GM12878 (cell line): ENCODE measurements at regions of chr15 and their contacts with region 1.

Region 1: DNA sequence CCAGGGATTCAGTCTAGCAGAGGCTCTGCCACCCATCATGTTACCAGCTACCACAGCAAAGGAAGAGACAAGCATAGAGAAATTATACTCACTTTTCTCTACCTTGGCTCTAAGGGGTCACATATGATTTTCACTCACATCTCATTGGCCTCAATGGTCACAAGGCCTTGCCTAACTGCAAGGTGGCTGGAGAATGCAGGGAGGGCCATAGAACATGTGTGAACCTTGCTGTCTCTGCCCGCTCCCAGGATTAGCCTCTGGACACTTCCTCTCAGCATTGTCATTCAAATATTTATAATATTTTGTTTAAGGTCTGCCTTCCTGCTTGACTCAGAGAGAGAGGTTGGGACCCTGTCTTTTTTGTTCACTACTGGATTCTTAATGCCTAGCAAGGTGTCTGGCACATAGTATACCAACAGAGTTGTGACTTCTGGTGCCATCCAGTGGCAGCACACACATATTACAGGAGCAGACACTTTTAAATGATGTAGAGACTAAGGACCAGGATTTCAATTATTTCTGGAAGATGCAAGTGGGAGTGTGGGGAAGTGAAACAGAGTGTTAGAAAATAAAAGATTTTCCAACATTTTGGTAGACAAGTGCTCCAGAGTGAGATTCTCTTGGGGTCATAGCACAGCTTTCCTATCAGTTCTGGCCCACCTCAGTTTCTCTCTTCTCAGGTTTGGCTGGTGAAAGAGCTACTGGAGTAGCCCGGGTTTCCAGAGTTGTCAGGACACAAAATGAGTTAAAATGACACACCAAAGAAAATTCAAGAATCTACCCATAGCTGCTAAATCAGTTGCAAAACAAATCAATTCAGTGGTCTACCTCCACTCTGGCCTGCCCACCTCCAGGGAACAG is 119.0 kb upstream of the RASGRP1 start:
- DNase-seq: no peak
- ATAC-seq: peak; percentile 94
- H3K4me3 ChIP-seq: no peak overlapping the region
- H3K27ac ChIP-seq: no peak overlapping the region
- H3K4me1 ChIP-seq: peaks cover 5% of the 10 kb centered on the region
- H3K27me3 ChIP-seq: no peaks in the 10 kb centered on the region
- CTCF ChIP-seq: peak; percentile 73 to 91 (median 88)
- EP300 ChIP-seq: no peak
- POLR2A ChIP-seq: no peak
- RAD21 ChIP-seq: peak; percentile 99

Region 2: GRCh38 chr15:38414357-38414756 is 269.3 kb before region 1 on chr15:
- CTCF ChIA-PET with region 1: no interaction called
- POLR2A ChIA-PET with region 1: no interaction called
- RAD21 ChIA-PET with region 1: no interaction called
- SMC1A ChIA-PET with region 1: no interaction called
- in situ Hi-C with region 1: no loop called
- intact Hi-C with region 1: no loop called
- DNase-seq: no peak
- ATAC-seq: peak; percentile 81
- H3K4me3 ChIP-seq: no peak overlapping the region
- H3K27ac ChIP-seq: no peak overlapping the region
- H3K4me1 ChIP-seq: no peaks in the 10 kb centered on the region
- H3K27me3 ChIP-seq: no peaks in the 10 kb centered on the region; a peak in 1 of 4 replicates
- CTCF ChIP-seq: peak; percentile 39 to 52 (median 51); a peak in 5 of 6 replicates
- EP300 ChIP-seq: no peak
- POLR2A ChIP-seq: no peak
- RAD21 ChIP-seq: peak; percentile 44

Region 3: DNA sequence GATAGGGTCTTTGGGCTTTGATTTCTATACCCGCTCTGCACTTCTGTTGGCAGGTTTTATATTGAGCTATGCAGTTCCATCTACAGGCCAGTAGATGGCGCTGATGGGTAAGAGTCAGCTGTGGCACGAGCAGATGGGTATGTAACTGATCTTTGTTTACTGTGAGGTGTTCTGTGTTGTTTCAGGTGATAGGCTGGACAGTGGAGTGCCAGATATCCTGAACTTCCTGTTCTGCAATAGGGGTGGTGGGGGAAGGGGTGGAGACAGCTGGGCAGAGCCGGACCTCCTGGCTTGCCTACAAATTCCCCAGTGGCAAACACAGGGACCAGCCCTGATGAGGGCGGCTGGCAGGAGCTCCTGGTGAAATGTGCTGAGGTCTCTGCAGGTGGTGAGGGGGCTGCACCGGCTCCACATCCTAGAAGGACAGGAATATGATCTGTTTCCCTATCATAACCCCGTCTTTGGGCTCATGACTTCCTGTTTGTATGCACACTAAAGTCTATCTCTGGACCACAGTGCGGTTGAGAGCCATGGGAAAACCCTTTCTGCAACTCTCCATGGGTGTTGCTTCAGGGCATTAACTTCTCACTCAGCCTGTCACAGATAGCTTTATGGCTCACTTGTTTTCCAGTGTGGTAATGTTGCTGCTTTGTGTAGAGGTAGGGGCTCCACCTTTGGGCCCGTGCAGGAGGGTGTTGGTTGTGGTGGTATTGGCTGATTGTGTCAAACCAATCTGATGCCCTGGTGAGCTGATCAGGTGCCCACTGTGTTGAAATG is 243.1 kb before region 1 on chr15:
- CTCF ChIA-PET with region 1: interaction called, 288 read pairs
- POLR2A ChIA-PET with region 1: interaction called, 4 read pairs
- RAD21 ChIA-PET with region 1: interaction called, 207 read pairs
- SMC1A ChIA-PET with region 1: interaction called, 212 read pairs
- in situ Hi-C with region 1: no loop called
- intact Hi-C with region 1: loop called (anchors 2 kb)
- DNase-seq: peak; percentile 44
- ATAC-seq: peak; percentile 92
- H3K4me3 ChIP-seq: no peak overlapping the region
- H3K27ac ChIP-seq: no peak overlapping the region
- H3K4me1 ChIP-seq: peaks cover 8% of the 10 kb centered on the region
- H3K27me3 ChIP-seq: peaks cover 0 to 3% of the 10 kb centered on the region in 2 experiments; a peak in 2 of 4 replicates
- CTCF ChIP-seq: peak; percentile 90 to 94 (median 91)
- EP300 ChIP-seq: no peak
- POLR2A ChIP-seq: no peak
- RAD21 ChIP-seq: peak; percentile 96

Region 4: GRCh38 chr15:38490242-38490922 is 193.2 kb before region 1 on chr15:
- CTCF ChIA-PET with region 1: interaction called, 16 read pairs
- POLR2A ChIA-PET with region 1: no interaction called
- RAD21 ChIA-PET with region 1: interaction called, 6 read pairs
- SMC1A ChIA-PET with region 1: interaction called, 37 read pairs
- in situ Hi-C with region 1: no loop called
- intact Hi-C with region 1: no loop called
- DNase-seq: no peak
- ATAC-seq: no peak
- H3K4me3 ChIP-seq: no peak overlapping the region
- H3K27ac ChIP-seq: no peak overlapping the region
- H3K4me1 ChIP-seq: no peaks in the 10 kb centered on the region
- H3K27me3 ChIP-seq: no peaks in the 10 kb centered on the region
- CTCF ChIP-seq: no peak
- EP300 ChIP-seq: no peak
- POLR2A ChIP-seq: no peak
- RAD21 ChIP-seq: no peak

Region 5: GRCh38 chr15:38536201-38536676 is 147.4 kb before region 1 on chr15:
- CTCF ChIA-PET with region 1: interaction called, 4 read pairs
- POLR2A ChIA-PET with region 1: no interaction called
- RAD21 ChIA-PET with region 1: interaction called, 21 read pairs
- SMC1A ChIA-PET with region 1: interaction called, 11 read pairs
- in situ Hi-C with region 1: no loop called
- intact Hi-C with region 1: no loop called
- DNase-seq: no peak
- ATAC-seq: no peak
- H3K4me3 ChIP-seq: no peak overlapping the region
- H3K27ac ChIP-seq: no peak overlapping the region
- H3K4me1 ChIP-seq: no peaks in the 10 kb centered on the region
- H3K27me3 ChIP-seq: no peaks in the 10 kb centered on the region
- CTCF ChIP-seq: no peak
- EP300 ChIP-seq: no peak
- POLR2A ChIP-seq: no peak
- RAD21 ChIP-seq: no peak

Region 6: DNA sequence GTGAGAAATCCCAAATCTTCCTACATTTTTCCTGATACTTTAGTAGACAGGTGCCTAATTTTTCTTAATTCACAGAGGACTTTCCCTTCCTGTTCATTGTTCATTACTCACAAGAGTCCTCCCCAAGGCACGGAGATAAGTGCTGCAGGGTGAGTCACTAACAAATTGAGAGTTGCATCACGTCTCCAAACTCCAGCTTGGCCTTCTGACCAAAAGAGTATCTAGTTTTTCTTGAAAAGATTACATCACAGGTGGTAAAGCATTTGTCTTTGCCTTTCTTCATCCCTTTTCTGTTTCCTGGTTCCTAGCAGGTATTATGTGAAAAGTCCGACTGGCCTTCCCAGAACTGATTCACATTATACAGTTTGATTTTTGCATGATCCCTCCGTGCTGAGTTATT is 94.1 kb before region 1 on chr15:
- CTCF ChIA-PET with region 1: interaction called, 4 read pairs
- POLR2A ChIA-PET with region 1: interaction called, 3 read pairs
- RAD21 ChIA-PET with region 1: interaction called, 9 read pairs
- SMC1A ChIA-PET with region 1: interaction called, 11 read pairs
- in situ Hi-C with region 1: no loop called
- intact Hi-C with region 1: no loop called
- DNase-seq: no peak
- ATAC-seq: no peak
- H3K4me3 ChIP-seq: no peak overlapping the region
- H3K27ac ChIP-seq: no peak overlapping the region
- H3K4me1 ChIP-seq: no peaks in the 10 kb centered on the region
- H3K27me3 ChIP-seq: no peaks in the 10 kb centered on the region
- CTCF ChIP-seq: no peak
- EP300 ChIP-seq: no peak
- POLR2A ChIP-seq: no peak
- RAD21 ChIP-seq: no peak

Region 7: GRCh38 chr15:38636597-38636996 is 47.0 kb before region 1 on chr15:
- CTCF ChIA-PET with region 1: interaction called, 52 read pairs
- POLR2A ChIA-PET with region 1: interaction called, 9 read pairs
- RAD21 ChIA-PET with region 1: interaction called, 322 read pairs
- SMC1A ChIA-PET with region 1: interaction called, 1,803 read pairs
- in situ Hi-C with region 1: no loop called
- intact Hi-C with region 1: no loop called
- DNase-seq: no peak
- ATAC-seq: no peak
- H3K4me3 ChIP-seq: no peak overlapping the region
- H3K27ac ChIP-seq: no peak overlapping the region
- H3K4me1 ChIP-seq: no peaks in the 10 kb centered on the region
- H3K27me3 ChIP-seq: no peaks in the 10 kb centered on the region
- CTCF ChIP-seq: no peak
- EP300 ChIP-seq: no peak
- POLR2A ChIP-seq: no peak
- RAD21 ChIP-seq: no peak

Region 8: GRCh38 chr15:38699633-38700230 is 16.1 kb after region 1 on chr15:
- CTCF ChIA-PET with region 1: interaction called, 283 read pairs
- POLR2A ChIA-PET with region 1: interaction called, 21 read pairs
- RAD21 ChIA-PET with region 1: interaction called, 109 read pairs
- SMC1A ChIA-PET with region 1: interaction called, 249 read pairs
- in situ Hi-C with region 1: no loop called
- intact Hi-C with region 1: no loop called
- DNase-seq: no peak
- ATAC-seq: peak; percentile 68
- H3K4me3 ChIP-seq: no peak overlapping the region
- H3K27ac ChIP-seq: no peak overlapping the region
- H3K4me1 ChIP-seq: peaks cover 19% of the 10 kb centered on the region
- H3K27me3 ChIP-seq: no peaks in the 10 kb centered on the region
- CTCF ChIP-seq: peak; percentile 85 to 92 (median 87)
- EP300 ChIP-seq: no peak
- POLR2A ChIP-seq: no peak
- RAD21 ChIP-seq: peak; percentile 79

Region 9: DNA sequence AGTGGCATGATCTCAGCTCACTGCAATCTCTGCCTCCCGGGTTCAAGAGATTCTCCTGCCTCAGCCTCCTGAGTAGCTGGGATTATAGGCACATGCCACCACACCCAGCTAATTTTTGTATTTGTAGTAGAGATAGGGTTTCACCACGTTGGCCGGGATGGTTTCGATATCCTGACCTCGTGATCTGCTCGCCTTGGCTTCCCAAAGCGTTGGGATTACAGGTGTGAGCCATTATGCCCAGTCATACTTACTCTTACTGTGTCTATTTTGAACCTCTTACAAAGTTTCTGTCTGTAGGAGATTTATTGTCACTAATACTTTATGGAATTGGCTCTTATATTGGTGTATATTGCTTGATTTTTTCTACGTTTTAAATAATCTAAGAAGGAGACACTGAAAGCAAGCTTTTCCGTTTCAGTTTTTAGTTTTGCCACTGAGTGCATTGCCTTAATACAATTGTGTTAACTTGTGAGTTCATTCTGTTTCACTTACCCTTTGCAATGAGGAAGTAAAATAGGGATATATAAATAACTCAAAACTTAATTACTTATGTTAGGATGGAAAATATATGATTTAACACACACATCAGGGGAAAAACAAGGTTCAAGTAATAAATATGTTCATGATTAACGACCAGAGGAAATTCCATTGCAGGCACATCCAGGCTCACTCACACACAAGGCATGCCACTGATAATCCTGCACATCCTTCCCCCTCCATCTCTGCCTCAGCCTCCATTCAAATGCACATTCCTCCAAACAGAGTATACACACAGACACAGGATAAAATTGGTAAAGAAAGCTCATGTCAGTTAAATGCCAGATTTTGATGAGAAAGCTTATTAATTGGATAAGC is 160.4 kb after region 1 on chr15:
- CTCF ChIA-PET with region 1: no interaction called
- POLR2A ChIA-PET with region 1: no interaction called
- RAD21 ChIA-PET with region 1: no interaction called
- SMC1A ChIA-PET with region 1: no interaction called
- in situ Hi-C with region 1: no loop called
- intact Hi-C with region 1: no loop called
- DNase-seq: no peak
- ATAC-seq: no peak
- H3K4me3 ChIP-seq: no peak overlapping the region
- H3K27ac ChIP-seq: no peak overlapping the region
- H3K4me1 ChIP-seq: no peaks in the 10 kb centered on the region
- H3K27me3 ChIP-seq: no peaks in the 10 kb centered on the region; a peak in 1 of 4 replicates
- CTCF ChIP-seq: no peak
- EP300 ChIP-seq: no peak
- POLR2A ChIP-seq: no peak
- RAD21 ChIP-seq: no peak

Region 10: GRCh38 chr15:39358441-39359041 is 674.9 kb after region 1 on chr15:
- CTCF ChIA-PET with region 1: no interaction called
- POLR2A ChIA-PET with region 1: no interaction called
- RAD21 ChIA-PET with region 1: no interaction called
- SMC1A ChIA-PET with region 1: no interaction called
- in situ Hi-C with region 1: no loop called
- intact Hi-C with region 1: no loop called
- DNase-seq: no peak
- ATAC-seq: peak; percentile 83
- H3K4me3 ChIP-seq: no peak overlapping the region
- H3K27ac ChIP-seq: no peak overlapping the region; the same call in 1 of the 2 replicates
- H3K4me1 ChIP-seq: no peaks in the 10 kb centered on the region; the same call in 1 of the 2 replicates
- H3K27me3 ChIP-seq: no peaks in the 10 kb centered on the region
- CTCF ChIP-seq: no peak
- EP300 ChIP-seq: no peak
- POLR2A ChIP-seq: no peak
- RAD21 ChIP-seq: no peak